ENCODE measurements at regions of chr7 and their contacts with region 1.

Region 1: GRCh38 chr7:81956520-81956919 is 186.7 kb upstream of the HGF start:
- DNase-seq: peak in 1 of 3 donors; percentile 9
- ATAC-seq: no peak
- H3K4me3 ChIP-seq: no peak overlapping the region
- H3K4me1 ChIP-seq: no peaks in the 10 kb centered on the region
- CTCF ChIP-seq: no peak

Region 2: DNA sequence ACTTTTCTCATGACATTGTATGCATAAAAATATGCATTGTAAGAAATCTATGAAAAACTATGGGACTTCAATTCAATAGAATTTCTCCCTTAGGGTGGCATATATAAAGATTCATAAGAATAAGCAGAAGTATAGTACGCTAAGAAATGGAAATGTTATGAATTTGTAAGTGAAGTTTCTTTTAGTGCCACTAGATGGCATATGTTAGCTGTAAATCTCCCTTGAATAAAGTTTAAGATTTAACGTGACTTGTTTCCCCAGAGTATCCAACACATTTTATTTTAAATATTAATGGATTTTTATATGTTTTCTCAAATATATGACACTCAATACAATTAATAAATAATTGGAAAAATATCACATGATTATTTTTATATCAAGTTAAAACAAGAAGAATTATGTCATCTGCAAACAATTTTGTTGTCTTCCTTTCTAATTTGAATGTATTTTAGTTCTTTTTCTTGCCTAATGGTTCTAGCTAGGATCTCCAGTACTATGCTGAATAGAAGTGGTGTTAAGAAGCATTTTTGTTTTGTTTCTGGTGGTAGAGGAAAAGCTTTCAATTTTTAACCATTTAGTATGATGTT is 473.8 kb before region 1 on chr7:
- intact Hi-C with region 1: loop called in 1 of 2 experiments (anchors 10 kb)
- DNase-seq: no peak
- ATAC-seq: no peak
- H3K4me3 ChIP-seq: no peak overlapping the region
- H3K4me1 ChIP-seq: no peaks in the 10 kb centered on the region
- CTCF ChIP-seq: peak; percentile 9

Region 3: DNA sequence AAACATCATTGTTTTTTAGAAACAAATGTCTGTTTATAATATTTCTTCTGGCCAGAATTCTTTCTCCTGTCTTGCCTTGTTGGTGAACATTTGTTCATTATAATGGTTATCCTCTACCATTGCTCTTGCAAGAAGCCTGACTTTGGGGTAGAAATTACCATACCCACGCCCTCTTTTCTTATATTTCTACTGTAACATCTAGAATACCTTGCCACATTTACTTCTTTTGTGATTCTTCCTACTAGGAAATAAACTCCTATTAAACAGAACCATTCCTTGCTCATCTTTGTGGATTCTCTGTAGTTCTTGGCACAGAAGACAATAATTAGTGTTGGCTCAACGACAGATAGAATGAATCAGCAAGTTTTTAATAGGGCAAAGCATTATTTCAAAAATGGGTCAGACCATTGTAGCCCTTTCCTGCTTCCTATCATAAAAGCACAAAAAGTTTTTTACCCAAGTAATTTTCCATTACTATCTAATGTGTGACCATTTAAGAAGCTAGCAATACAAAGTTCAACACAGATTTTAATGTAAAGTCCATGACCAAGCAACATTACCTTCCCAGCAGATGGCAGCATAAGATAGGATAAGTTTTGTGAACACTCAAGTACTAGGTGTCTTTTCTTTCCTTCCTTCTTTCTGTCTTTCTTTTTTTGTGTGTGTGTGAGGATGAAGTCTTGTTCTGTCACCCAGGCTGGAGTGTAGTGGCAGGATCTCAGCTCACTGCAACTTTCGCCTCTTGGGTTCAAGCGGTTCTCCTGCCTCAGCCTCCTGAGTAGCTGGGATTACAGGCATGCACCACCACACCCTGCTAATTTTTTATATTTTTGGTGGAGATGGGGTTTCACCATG is 457.0 kb before region 1 on chr7:
- intact Hi-C with region 1: loop called in 1 of 2 experiments (anchors 5 kb)
- DNase-seq: peak in 1 of 3 donors; percentile 57
- ATAC-seq: peak; percentile 55
- H3K4me3 ChIP-seq: no peak overlapping the region
- H3K4me1 ChIP-seq: no peaks in the 10 kb centered on the region
- CTCF ChIP-seq: peak; percentile 33